Colonic mucosa (tissue), 4 donors: ENCODE measurements at regions of chrX and their contacts with region 1.

Region 1: GRCh38 chrX:9464435-9465371 is at the start of gene TBL1X:
- DNase-seq: peak; percentile 58
- H3K4me3 ChIP-seq: peak within 1 kb of the TSS; percentile 52
- H3K27ac ChIP-seq: peak within 1 kb of the TSS; percentile 25
- H3K4me1 ChIP-seq: peaks cover 10% of the 10 kb centered on the region
- H3K27me3 ChIP-seq: peaks cover 9% of the 10 kb centered on the region
- CTCF ChIP-seq: no peak
- total RNA-seq, gene TBL1X: 16.3 to 18.9 TPM

Region 2: DNA sequence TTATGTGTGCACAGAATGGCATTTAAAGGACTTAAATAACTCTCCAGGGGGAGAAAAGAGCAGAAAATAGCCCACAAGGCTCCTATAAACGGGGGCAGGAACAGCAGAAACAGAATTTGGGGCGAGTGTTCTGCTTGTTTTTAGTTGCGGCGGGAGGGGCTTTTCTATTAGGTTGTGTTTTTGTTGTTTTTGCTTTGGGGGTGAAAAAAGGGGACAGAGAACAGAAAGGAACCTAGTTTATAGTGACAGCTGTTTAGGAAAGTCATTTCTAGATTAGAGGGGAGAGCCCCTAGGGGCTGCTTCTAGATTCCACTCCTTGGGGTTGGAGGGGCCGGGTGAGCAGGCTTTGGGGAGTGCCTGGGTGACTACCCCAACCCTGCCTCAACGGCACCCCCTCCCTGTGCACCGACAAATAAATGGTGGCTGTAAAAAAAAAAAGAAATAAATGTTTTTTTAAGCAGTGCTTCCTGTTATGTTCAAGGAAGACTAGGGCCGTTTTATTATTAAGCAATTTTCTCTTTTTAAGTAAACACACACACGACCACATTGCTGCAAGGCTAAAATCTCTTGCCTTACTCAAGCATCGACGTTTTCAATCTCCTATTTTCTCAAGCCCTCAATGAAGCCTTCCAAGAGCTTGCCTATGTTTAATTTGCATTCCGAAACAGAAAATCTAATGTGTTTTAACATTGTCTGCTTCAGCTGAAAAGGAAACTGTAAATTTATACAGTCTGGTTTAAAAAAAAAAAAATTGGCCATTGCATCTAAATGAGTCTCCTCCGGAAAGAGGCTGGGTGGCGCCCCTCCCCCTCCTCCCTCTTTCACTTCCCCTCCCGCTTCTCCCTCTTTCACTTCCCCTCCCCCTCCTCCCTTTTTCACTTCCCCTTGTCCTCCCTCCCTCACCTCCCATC is 123.2 kb before region 1 on chrX:
- intact Hi-C with region 1: loop called (anchors 1 kb)
- DNase-seq: peak; percentile 72
- H3K4me3 ChIP-seq: no peak overlapping the region
- H3K27ac ChIP-seq: peak overlapping the region; percentile 78
- H3K4me1 ChIP-seq: peaks cover 4% of the 10 kb centered on the region
- H3K27me3 ChIP-seq: no peaks in the 10 kb centered on the region
- CTCF ChIP-seq: no peak

Region 3: DNA sequence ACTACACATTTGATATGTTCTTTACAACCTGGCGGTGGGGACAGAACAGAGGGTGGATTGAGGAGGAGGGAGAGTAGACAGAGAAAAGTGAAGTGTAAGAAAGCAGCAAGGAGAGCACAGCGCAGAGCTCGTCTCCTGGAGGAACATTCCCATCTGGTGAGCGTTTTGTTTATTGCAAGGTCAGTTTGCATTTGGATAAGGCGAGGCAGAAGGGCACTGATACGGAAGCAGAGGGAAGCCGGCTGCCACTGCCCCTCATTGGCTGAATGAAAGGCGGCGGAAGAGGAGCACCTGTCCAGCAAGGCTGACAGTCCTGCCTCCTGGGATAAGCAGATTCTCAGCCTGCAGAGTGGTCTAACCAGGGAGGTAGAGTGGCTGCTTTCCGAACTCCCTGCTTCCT is 217.8 kb after region 1 on chrX:
- intact Hi-C with region 1: loop called (anchors 10 kb)
- DNase-seq: peak; percentile 47
- H3K4me3 ChIP-seq: no peak overlapping the region
- H3K27ac ChIP-seq: no peak overlapping the region
- H3K4me1 ChIP-seq: no peaks in the 10 kb centered on the region
- H3K27me3 ChIP-seq: no peaks in the 10 kb centered on the region
- CTCF ChIP-seq: no peak

Region 4: GRCh38 chrX:9788911-9789310 is 324.2 kb after region 1 on chrX:
- intact Hi-C with region 1: no loop called
- DNase-seq: no peak
- H3K4me3 ChIP-seq: no peak overlapping the region
- H3K27ac ChIP-seq: no peak overlapping the region
- H3K4me1 ChIP-seq: no peaks in the 10 kb centered on the region
- H3K27me3 ChIP-seq: peaks cover 9% of the 10 kb centered on the region
- CTCF ChIP-seq: no peak